ENCODE measurements at regions of chr10 and their contacts with region 1.

Region 1: GRCh38 chr10:12656518-12657142 is 307.3 kb downstream of the CAMK1D start:
- DNase-seq: peak in 1 of 2 experiments; percentile 44
- H3K4me3 ChIP-seq: no peak overlapping the region
- H3K27ac ChIP-seq: no peak overlapping the region
- H3K4me1 ChIP-seq: no peaks in the 10 kb centered on the region
- H3K27me3 ChIP-seq: no peaks in the 10 kb centered on the region
- CTCF ChIP-seq: peak; percentile 76

Region 2: DNA sequence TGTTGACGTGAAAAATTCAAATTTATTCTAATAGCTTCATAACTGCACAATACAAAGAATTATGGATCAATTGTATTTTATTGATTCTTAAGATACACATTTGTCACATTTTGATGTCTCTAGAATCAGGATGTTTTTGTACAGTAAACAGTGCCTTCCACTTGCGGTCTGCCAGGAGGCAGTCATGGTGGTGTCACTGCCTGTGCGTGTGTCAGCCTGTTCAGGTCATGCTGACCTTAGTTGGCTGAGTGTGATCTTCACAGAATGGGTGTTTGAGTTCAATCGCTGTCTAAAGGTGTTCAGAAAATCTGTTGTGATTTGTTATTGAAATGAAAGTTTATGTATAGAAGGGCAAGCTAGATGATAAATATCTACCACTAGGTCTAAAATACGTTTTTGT is 506.5 kb before region 1 on chr10:
- CTCF ChIA-PET with region 1: no interaction called
- POLR2A ChIA-PET with region 1: interaction called, 10 read pairs
- intact Hi-C with region 1: no loop called
- DNase-seq: no peak
- H3K4me3 ChIP-seq: no peak overlapping the region
- H3K27ac ChIP-seq: no peak overlapping the region
- H3K4me1 ChIP-seq: no peaks in the 10 kb centered on the region
- H3K27me3 ChIP-seq: no peaks in the 10 kb centered on the region
- CTCF ChIP-seq: no peak

Region 3: GRCh38 chr10:12348870-12349628 is 307.6 kb before region 1 on chr10 and contains the start of gene CAMK1D:
- CTCF ChIA-PET with region 1: no interaction called
- POLR2A ChIA-PET with region 1: no interaction called
- intact Hi-C with region 1: loop called (anchors 10 kb)
- DNase-seq: peak; percentile 46 to 70
- H3K4me3 ChIP-seq: peak within 1 kb of the TSS; percentile 90
- H3K27ac ChIP-seq: 0 out of 2 replicates have a peak within 1 kb of the TSS, but pooled peaks have one; percentile 1
- H3K4me1 ChIP-seq: peaks cover 22% of the 10 kb centered on the region
- H3K27me3 ChIP-seq: no peaks in the 10 kb centered on the region
- CTCF ChIP-seq: no peak
- total RNA-seq, gene CAMK1D: 6.0 and 8.8 TPM in 2 replicates